A549 (cell line): ENCODE measurements at regions of chr7 and their contacts with region 1.

Region 1: GRCh38 chr7:55641273-55641691 is 69.0 kb upstream of the VOPP1 start:
- DNase-seq: peak; percentile 41 to 81
- ATAC-seq: peak; percentile 93 to 95
- H3K4me3 ChIP-seq: no peak overlapping the region
- H3K27ac ChIP-seq: no peak overlapping the region
- H3K4me1 ChIP-seq: no peaks in the 10 kb centered on the region
- CTCF ChIP-seq: peak; percentile 73
- EP300 ChIP-seq: no peak
- POLR2A ChIP-seq: no peak
- RAD21 ChIP-seq: peak; percentile 86 to 93

Region 2: DNA sequence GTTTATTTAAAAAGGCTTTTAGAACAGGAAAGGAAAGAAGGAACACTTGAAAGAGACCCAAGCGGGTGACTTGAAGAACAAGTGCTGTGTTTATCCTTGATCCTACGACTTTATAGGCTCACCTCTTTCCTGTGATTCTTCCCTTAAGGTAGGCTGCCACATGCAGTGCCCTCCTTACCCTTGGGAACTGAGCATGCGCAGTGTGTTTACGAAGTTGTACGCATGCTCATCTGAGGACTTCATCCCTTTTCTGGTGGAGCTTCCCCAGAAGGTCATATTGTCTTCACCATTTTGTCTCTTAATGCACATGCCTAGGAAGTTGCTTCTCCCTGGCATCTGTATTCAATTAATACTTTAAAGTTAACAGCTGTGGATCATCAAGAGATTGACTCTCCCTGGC is 19.0 kb before region 1 on chr7:
- CTCF ChIA-PET with region 1: interaction called, 10 read pairs
- POLR2A ChIA-PET with region 1: no interaction called
- DNase-seq: no peak
- ATAC-seq: no peak
- H3K4me3 ChIP-seq: no peak overlapping the region
- H3K27ac ChIP-seq: no peak overlapping the region
- H3K4me1 ChIP-seq: no peaks in the 10 kb centered on the region
- CTCF ChIP-seq: no peak
- EP300 ChIP-seq: no peak
- POLR2A ChIP-seq: no peak
- RAD21 ChIP-seq: no peak

Region 3: GRCh38 chr7:55964261-55965099 is 323.2 kb after region 1 on chr7 and contains the start of gene NIPSNAP2:
- CTCF ChIA-PET with region 1: interaction called, 19 read pairs
- POLR2A ChIA-PET with region 1: interaction called, 4 read pairs
- DNase-seq: peak; percentile 41 to 69
- ATAC-seq: peak; percentile 90 to 91
- H3K4me3 ChIP-seq: peak within 1 kb of the TSS; percentile 69
- H3K27ac ChIP-seq: peak within 1 kb of the TSS; percentile 92 to 97
- H3K4me1 ChIP-seq: peaks cover 10% of the 10 kb centered on the region; the same call in 2 of the 3 replicates
- CTCF ChIP-seq: peak; percentile 86
- EP300 ChIP-seq: no peak
- POLR2A ChIP-seq: peak; percentile 74
- RAD21 ChIP-seq: peak; percentile 21 to 32; a peak in 4 of 5 replicates
- polyA plus RNA-seq, gene NIPSNAP2: 96.2 and 135 TPM in 2 replicates